ENCODE measurements at regions of chr5 and their contacts with region 1.

Region 1: DNA sequence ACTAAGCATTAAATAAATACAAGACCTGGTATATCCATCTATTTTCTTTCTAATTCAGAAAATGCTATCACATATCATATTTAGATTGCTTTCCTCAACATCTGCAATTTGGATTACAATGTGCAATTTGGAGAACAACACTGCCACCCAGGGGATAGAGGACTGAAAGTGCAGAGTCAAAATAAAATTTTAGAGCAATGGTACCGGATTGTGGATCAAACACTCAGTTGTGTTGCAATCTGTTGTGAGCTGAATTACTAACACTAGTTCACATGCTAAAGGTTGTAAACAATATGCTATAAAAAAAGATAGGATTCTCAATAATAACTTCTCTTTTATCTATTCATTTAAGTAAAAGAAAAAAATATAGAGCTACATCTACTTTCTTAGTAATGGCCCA is 11.9 kb upstream of the SRFBP1 start:
- DNase-seq: no peak
- H3K4me3 ChIP-seq: no peak overlapping the region
- H3K27ac ChIP-seq: no peak overlapping the region
- H3K4me1 ChIP-seq: no peaks in the 10 kb centered on the region
- H3K27me3 ChIP-seq: no peaks in the 10 kb centered on the region
- CTCF ChIP-seq: peak in 3 of 4 experiments; percentile 29 to 32 (median 30)
- EP300 ChIP-seq: no peak
- POLR2A ChIP-seq: no peak

Region 2: DNA sequence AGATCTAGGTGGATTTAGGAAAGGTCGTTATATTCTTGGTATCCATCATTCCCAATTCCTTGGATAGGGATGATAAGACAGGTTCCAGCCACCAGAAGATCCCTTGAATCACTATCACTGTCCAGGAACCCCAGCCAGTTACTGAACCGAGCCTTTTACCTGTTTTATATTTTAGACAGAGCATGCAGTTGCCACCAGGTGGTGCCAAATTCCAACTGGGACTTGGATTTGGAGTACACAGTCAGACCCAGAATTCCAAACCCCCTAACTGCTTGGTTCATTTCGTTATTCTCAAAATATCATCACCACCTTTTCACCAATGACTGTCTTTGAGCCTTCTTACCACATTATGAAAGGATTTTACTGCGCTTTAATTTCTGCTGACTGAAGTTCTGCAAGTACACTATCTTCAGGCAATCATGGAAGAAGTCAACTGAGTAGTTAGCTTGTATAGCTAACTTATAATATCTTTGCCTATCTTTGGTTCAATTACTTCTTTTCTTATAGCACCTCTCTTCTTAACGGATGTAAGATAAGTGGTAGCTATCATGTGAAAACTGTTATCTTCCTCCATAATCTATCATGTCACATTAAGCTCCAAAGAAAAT is 1293.9 kb before region 1 on chr5:
- intact Hi-C with region 1: loop called (anchors 5 kb)
- DNase-seq: no peak
- H3K4me3 ChIP-seq: no peak overlapping the region
- H3K27ac ChIP-seq: no peak overlapping the region
- H3K4me1 ChIP-seq: no peaks in the 10 kb centered on the region
- H3K27me3 ChIP-seq: no peaks in the 10 kb centered on the region
- CTCF ChIP-seq: peak in 2 of 4 experiments; percentile 20 to 46
- EP300 ChIP-seq: no peak
- POLR2A ChIP-seq: no peak